ENCODE measurements at regions of chr3 and their contacts with region 1.

Region 1: GRCh38 chr3:138915503-138916498 is 31.1 kb downstream of the FOXL2 start:
- DNase-seq: peak; percentile 93
- ATAC-seq: peak; percentile 89
- H3K4me3 Mint-ChIP-seq: peak overlapping the region; percentile 76
- H3K27ac Mint-ChIP-seq: peak overlapping the region; percentile 73
- H3K4me1 Mint-ChIP-seq: peaks cover 5% of the 10 kb centered on the region
- H3K27me3 Mint-ChIP-seq: peaks cover 2% of the 10 kb centered on the region

Region 2: DNA sequence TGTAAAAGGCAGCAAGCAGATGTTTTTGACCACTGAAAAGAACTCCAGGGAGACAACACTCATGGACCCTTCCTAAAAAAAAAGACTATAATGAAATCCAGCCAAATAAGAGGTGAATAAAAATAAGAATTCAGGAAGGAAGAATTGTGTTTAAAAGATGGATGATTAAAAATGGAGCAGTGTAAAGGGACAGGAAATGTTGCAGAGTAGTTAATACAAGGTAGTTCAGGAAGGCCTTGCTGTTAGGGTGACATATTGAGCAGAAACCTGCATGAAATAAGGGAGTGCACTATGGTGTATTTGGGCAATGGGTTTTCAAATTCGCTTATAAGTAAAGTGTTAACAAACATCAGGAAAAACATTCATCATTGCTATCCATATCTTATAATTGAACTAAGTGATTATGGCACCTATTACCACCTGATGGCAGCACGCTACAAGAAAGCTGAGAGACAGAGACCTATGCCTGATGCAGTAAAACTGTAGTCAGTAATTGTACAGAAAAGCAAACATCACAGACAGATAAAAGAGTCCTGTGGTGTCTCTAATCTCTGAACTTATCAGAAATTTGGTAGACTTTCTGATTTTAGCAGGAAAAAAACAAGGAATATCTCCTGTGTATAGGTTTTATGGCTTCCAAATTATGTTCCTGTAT is 735.3 kb before region 1 on chr3:
- CTCF ChIA-PET with region 1: interaction called, 3 read pairs
- POLR2A ChIA-PET with region 1: no interaction called
- intact Hi-C with region 1: loop called in 1 of 2 experiments (anchors 5 kb)
- DNase-seq: peak; percentile 61
- ATAC-seq: peak; percentile 95
- H3K4me3 Mint-ChIP-seq: no peak overlapping the region
- H3K27ac Mint-ChIP-seq: no peak overlapping the region
- H3K4me1 Mint-ChIP-seq: no peaks in the 10 kb centered on the region
- H3K27me3 Mint-ChIP-seq: peaks cover 3% of the 10 kb centered on the region

Region 3: GRCh38 chr3:138434276-138434874 is 481.4 kb before region 1 on chr3 and contains the start of gene ESYT3:
- CTCF ChIA-PET with region 1: interaction called, 12 read pairs
- POLR2A ChIA-PET with region 1: no interaction called
- intact Hi-C with region 1: no loop called
- DNase-seq: peak; percentile 83
- ATAC-seq: peak; percentile 97
- H3K4me3 Mint-ChIP-seq: peak within 1 kb of the TSS; percentile 63
- H3K27ac Mint-ChIP-seq: no peak within 1 kb of the TSS
- H3K4me1 Mint-ChIP-seq: peaks cover 5% of the 10 kb centered on the region
- H3K27me3 Mint-ChIP-seq: peaks cover 43% of the 10 kb centered on the region
- total RNA-seq, gene ESYT3: 0.21 to 0.37 TPM

Region 4: DNA sequence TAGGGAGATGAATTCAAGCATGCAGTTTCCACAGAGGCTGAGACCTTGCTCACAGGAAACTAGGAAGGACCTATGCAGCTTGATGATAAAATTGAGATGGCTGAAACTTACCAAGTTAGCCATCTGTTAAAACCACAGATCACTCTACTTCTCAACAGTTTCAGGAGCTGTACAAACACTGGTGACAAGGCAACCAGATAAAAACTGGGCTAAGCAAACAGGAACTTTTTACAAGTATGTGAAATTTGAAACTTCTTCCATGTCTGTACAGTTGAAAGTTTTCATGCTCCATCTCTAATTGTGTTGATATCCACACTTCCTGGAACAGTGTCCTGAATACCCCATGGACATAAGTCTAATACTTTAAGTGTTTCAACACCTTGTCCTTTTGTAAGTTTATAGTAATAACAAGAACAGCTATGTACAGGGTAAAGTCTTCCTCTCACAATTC is 229.0 kb before region 1 on chr3:
- CTCF ChIA-PET with region 1: interaction called, 40 read pairs
- POLR2A ChIA-PET with region 1: no interaction called
- intact Hi-C with region 1: no loop called
- DNase-seq: no peak
- ATAC-seq: peak; percentile 69
- H3K4me3 Mint-ChIP-seq: no peak overlapping the region
- H3K27ac Mint-ChIP-seq: peak overlapping the region; percentile 77
- H3K4me1 Mint-ChIP-seq: peaks cover 12% of the 10 kb centered on the region
- H3K27me3 Mint-ChIP-seq: no peaks in the 10 kb centered on the region

Region 5: GRCh38 chr3:138781012-138781470 is 134.8 kb before region 1 on chr3:
- CTCF ChIA-PET with region 1: interaction called, 6 read pairs
- POLR2A ChIA-PET with region 1: no interaction called
- intact Hi-C with region 1: loop called in 1 of 2 experiments (anchors 5 kb)
- DNase-seq: peak; percentile 47
- ATAC-seq: peak; percentile 97
- H3K4me3 Mint-ChIP-seq: no peak overlapping the region
- H3K27ac Mint-ChIP-seq: peak overlapping the region; percentile 58
- H3K4me1 Mint-ChIP-seq: peaks cover 29% of the 10 kb centered on the region
- H3K27me3 Mint-ChIP-seq: no peaks in the 10 kb centered on the region

Region 6: GRCh38 chr3:138935848-138936740 is 20.3 kb after region 1 on chr3:
- CTCF ChIA-PET with region 1: interaction called, 41 read pairs
- POLR2A ChIA-PET with region 1: no interaction called
- intact Hi-C with region 1: no loop called
- DNase-seq: peak; percentile 84
- ATAC-seq: peak; percentile 73
- H3K4me3 Mint-ChIP-seq: peak overlapping the region; percentile 63
- H3K27ac Mint-ChIP-seq: no peak overlapping the region
- H3K4me1 Mint-ChIP-seq: peaks cover 25% of the 10 kb centered on the region
- H3K27me3 Mint-ChIP-seq: peaks cover 61% of the 10 kb centered on the region